ENCODE measurements at regions of chr19 and their contacts with region 1.

Region 1: GRCh38 chr19:52269338-52270261 is at the start of gene ZNF766:
- DNase-seq: peak; percentile 91
- H3K4me3 ChIP-seq: peak within 1 kb of the TSS; percentile 74 to 85 (median 81)
- H3K27ac ChIP-seq: peak within 1 kb of the TSS; percentile 86
- H3K4me1 ChIP-seq: peaks cover 4% of the 10 kb centered on the region
- H3K27me3 ChIP-seq: no peaks in the 10 kb centered on the region
- CTCF ChIP-seq: no peak
- total RNA-seq, gene ZNF766: 12.0 to 12.3 TPM

Region 2: DNA sequence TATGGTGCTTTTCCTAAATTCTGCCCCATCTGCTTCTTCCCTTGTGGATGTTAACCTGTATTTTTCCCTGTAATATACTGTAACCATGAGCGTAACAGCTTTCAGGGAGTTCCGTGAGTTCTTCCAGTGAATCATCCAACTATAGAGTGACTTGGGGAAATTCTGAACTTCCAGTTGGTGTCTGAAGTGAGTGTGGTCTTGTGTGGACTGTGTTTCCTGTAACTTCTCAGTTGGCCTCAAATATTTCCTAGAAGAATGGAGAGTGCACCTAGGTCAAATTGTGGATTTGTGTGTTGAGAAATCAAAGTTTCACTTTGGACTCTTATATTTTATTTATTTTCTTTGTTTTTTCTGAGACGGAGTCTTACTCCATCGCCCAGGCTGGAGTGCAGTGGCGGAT is 11.2 kb before region 1 on chr19:
- CTCF ChIA-PET with region 1: no interaction called
- dilution Hi-C with region 1: no loop called
- in situ Hi-C with region 1: no loop called
- intact Hi-C with region 1: no loop called
- DNase-seq: no peak
- H3K4me3 ChIP-seq: no peak overlapping the region
- H3K27ac ChIP-seq: no peak overlapping the region
- H3K4me1 ChIP-seq: no peaks in the 10 kb centered on the region
- H3K27me3 ChIP-seq: no peaks in the 10 kb centered on the region
- CTCF ChIP-seq: no peak

Region 3: GRCh38 chr19:52322429-52322828 is 52.8 kb after region 1 on chr19:
- CTCF ChIA-PET with region 1: no interaction called
- dilution Hi-C with region 1: loop called (anchors 5 kb)
- in situ Hi-C with region 1: no loop called
- intact Hi-C with region 1: no loop called
- DNase-seq: no peak
- H3K4me3 ChIP-seq: no peak overlapping the region
- H3K27ac ChIP-seq: no peak overlapping the region
- H3K4me1 ChIP-seq: no peaks in the 10 kb centered on the region
- H3K27me3 ChIP-seq: no peaks in the 10 kb centered on the region
- CTCF ChIP-seq: no peak

Region 4: DNA sequence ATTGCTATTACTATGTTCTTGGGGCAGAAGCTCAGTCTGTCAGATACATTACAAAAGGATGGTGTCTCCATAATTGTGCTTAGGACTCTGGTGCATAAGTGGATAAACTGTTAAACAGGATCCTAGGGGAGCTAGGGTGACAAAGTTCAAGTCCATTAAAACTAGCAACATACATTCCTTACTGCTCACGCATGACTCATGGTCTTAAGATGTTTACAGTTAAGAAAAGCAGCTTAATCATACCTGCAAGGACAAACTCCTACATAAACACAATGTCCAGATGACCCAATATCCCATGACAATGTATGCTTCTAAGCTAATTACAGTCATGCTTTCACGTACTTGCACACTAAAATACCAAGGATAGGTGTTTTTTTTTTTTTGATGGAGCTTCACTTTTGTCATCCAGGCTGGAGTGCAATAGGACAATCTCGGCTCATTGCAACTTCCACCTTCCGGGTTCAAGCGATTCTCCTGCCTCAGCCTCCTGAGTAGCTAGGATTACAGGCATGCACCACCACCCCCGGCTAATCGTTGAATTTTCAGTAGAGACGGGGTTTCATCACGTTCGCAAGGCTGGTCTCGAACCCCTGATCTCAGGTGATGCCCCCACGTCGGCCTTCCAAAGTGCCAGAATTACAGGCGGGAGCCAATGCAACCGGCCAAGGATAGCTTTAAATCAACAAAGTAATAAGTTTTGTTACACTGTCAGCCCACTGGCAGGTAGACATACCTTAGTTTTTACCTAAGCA is 297.2 kb after region 1 on chr19:
- CTCF ChIA-PET with region 1: no interaction called
- dilution Hi-C with region 1: no loop called
- in situ Hi-C with region 1: no loop called
- intact Hi-C with region 1: no loop called
- DNase-seq: peak; percentile 75
- H3K4me3 ChIP-seq: no peak overlapping the region
- H3K27ac ChIP-seq: peak overlapping the region; percentile 14
- H3K4me1 ChIP-seq: peaks cover 3% of the 10 kb centered on the region
- H3K27me3 ChIP-seq: no peaks in the 10 kb centered on the region
- CTCF ChIP-seq: no peak